ENCODE measurements at regions of chr13 and their contacts with region 1.

Region 1: GRCh38 chr13:46492946-46493345 is 60.0 kb upstream of the LRCH1 start:
- DNase-seq: peak; percentile 14 to 24
- H3K4me3 ChIP-seq: no peak overlapping the region
- H3K4me1 ChIP-seq: no peaks in the 10 kb centered on the region
- H3K27me3 ChIP-seq: no peaks in the 10 kb centered on the region

Region 2: GRCh38 chr13:46712524-46712923 is 219.6 kb after region 1 on chr13:
- in situ Hi-C with region 1: loop called (anchors 10 kb)
- DNase-seq: no peak
- H3K4me3 ChIP-seq: no peak overlapping the region
- H3K4me1 ChIP-seq: no peaks in the 10 kb centered on the region
- H3K27me3 ChIP-seq: no peaks in the 10 kb centered on the region

Measured in HAP-1 (cell line).